ENCODE measurements at regions of chr17 and their contacts with region 1.

Region 1: DNA sequence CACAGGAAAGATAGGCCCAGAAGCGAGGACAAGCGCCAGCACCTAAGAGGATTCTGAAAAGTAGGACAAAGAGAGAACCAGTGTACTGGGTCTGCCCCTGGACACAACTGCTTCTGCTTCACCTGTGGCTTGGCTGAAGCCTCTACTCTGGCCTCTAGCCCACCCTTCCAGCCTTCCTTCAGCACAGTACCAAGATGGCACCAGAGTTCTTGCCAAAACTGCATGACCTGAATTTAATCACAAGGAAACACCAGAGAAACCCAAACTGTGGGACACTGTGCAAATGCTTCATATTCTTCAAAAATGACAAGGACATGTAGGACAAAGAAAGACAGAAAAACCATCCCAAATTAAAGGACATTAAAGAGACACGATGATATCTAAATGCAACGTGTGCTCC is 116.6 kb downstream of the SMG6 start:
- DNase-seq: no peak
- H3K4me3 ChIP-seq: no peak overlapping the region
- H3K4me3 Mint-ChIP-seq: no peak overlapping the region
- H3K27ac ChIP-seq: no peak overlapping the region
- H3K27ac Mint-ChIP-seq: peak overlapping the region in 2 of 7 donors; percentile 15 to 36
- H3K4me1 ChIP-seq: peaks cover 8% of the 10 kb centered on the region
- H3K4me1 Mint-ChIP-seq: peaks cover 9 to 33% (median 16%) of the 10 kb centered on the region in 4 donors
- H3K27me3 ChIP-seq: no peaks in the 10 kb centered on the region
- H3K27me3 Mint-ChIP-seq: no peaks in the 10 kb centered on the region

Region 2: DNA sequence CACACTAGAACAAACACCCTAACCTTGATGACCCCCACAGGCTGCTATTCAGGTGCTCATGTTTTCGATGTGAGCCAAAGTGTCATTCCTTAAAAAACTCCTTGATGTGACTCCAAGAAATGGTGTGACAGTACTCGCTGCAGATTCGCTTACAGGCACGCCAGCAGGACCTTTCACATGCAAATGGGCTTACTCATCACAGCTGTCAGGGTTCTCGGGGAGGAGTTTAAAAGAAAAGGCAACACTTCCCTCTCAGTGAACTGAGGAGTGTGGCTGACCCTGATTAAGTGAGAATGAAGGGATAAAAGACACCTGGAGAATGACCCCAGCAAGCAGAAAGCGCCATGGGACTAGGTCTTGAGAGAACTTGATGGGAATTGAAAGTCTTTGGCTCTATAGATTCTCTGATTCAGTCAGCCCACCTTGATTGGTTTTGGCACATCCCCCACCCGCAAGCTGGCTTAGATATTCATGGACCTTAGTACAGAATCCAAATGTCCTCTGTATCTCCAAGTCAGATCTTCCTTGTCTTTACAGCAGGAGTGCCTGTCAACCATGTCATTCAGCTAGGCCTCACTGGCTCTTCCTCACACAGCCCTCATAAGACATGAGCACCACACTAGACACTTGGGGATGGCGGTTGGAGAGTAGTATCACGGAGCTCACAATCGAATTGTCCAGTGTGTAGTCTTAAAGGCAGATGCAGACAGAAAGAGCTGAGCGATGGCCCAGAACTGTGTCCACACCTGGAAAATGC is 49.4 kb before region 1 on chr17:
- CTCF ChIA-PET with region 1: no interaction called
- POLR2A ChIA-PET with region 1: no interaction called
- intact Hi-C with region 1: no loop called
- DNase-seq: no peak
- H3K4me3 ChIP-seq: no peak overlapping the region
- H3K4me3 Mint-ChIP-seq: no peak overlapping the region
- H3K27ac ChIP-seq: no peak overlapping the region
- H3K27ac Mint-ChIP-seq: peak overlapping the region in 5 of 7 donors; percentile 10 to 87 (median 49)
- H3K4me1 ChIP-seq: peaks cover 14% of the 10 kb centered on the region
- H3K4me1 Mint-ChIP-seq: peaks cover 13 to 16% (median 14%) of the 10 kb centered on the region in 4 donors
- H3K27me3 ChIP-seq: no peaks in the 10 kb centered on the region
- H3K27me3 Mint-ChIP-seq: no peaks in the 10 kb centered on the region

Region 3: DNA sequence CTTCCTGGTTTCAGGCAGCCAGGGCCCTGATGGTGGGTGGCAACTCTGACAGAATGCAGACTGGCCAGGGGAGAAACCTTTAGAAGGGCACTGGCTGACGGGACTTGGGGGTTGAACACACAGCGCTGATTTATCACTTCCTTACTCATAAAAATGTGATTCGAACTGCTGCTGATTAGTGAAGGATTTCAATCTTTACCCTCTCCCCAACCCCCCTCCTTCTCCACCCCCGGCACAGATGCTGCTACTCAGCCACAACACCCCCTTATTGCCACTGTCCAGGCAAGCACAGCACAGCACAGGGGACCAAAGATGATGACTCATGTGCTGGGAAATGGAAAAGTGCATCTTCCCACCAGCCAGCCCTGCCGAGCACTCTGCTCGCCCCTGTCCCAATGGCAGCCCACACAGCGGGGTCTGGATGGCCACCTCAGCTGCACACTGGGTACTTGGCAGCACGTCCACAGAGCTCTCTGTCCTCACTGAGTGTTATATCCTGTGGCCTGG is 46.6 kb after region 1 on chr17:
- CTCF ChIA-PET with region 1: no interaction called
- POLR2A ChIA-PET with region 1: no interaction called
- intact Hi-C with region 1: loop called (anchors 1 kb)
- DNase-seq: no peak
- H3K4me3 ChIP-seq: no peak overlapping the region
- H3K4me3 Mint-ChIP-seq: no peak overlapping the region
- H3K27ac ChIP-seq: no peak overlapping the region
- H3K27ac Mint-ChIP-seq: peak overlapping the region in 3 of 7 donors; percentile 1 to 38 (median 11)
- H3K4me1 ChIP-seq: no peaks in the 10 kb centered on the region
- H3K4me1 Mint-ChIP-seq: peaks cover 6 to 20% (median 13%) of the 10 kb centered on the region in 4 donors
- H3K27me3 ChIP-seq: no peaks in the 10 kb centered on the region
- H3K27me3 Mint-ChIP-seq: no peaks in the 10 kb centered on the region